ENCODE measurements at regions of chr16 and their contacts with region 1.

Region 1: DNA sequence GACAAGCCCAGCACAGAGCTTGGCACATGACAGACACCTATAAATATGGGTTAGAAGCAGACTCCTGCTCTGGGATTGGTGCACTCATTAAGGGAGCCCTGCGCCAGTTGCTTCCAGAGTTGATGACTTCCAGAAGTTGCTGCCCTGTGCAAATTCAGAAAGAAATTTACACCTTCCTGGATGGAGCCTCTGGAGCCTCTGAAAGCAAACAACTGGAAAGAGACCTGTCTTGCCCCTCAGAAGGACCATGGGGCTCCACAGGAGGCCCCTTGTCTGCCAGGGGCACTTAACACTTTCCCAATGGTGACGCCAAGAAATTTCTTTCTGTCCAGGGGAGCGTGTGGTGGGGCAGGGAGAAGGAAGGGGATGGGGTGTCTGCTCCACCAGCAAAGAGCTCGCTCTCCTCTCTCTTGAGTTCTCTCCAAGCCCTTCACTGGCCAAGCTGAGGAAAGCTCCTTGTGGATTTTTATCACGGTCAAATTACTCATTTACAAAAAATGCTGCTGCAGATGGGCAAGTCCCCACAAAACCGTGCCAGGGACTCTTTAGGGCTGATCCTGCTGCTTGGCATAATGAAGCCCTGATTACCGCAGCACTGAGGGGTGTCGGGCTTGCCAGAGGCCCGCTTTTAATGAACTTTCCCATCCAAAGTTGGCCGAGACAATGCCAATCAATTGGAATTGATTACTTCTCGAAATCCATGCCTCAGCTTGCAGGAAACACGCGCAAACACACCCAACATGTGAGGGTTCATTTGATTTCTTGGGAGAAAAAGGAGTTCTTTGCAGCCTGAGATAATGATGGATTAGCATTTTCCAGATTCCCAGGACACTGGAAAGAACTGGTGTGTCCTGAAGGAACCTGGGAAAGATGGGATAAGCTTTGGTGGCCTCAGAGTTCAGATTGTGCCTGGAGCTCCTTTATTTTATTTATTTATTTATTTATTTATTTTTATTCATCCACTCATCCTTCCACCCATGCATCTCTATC is 583.6 kb upstream of the CDH5 start:
- DNase-seq: peak in 1 of 2 donors; percentile 61
- ATAC-seq: no peak
- H3K4me3 ChIP-seq: no peak overlapping the region
- H3K27ac ChIP-seq: no peak overlapping the region
- H3K4me1 ChIP-seq: peaks cover 0 to 8% of the 10 kb centered on the region in 2 donors
- H3K27me3 ChIP-seq: no peaks in the 10 kb centered on the region

Region 2: DNA sequence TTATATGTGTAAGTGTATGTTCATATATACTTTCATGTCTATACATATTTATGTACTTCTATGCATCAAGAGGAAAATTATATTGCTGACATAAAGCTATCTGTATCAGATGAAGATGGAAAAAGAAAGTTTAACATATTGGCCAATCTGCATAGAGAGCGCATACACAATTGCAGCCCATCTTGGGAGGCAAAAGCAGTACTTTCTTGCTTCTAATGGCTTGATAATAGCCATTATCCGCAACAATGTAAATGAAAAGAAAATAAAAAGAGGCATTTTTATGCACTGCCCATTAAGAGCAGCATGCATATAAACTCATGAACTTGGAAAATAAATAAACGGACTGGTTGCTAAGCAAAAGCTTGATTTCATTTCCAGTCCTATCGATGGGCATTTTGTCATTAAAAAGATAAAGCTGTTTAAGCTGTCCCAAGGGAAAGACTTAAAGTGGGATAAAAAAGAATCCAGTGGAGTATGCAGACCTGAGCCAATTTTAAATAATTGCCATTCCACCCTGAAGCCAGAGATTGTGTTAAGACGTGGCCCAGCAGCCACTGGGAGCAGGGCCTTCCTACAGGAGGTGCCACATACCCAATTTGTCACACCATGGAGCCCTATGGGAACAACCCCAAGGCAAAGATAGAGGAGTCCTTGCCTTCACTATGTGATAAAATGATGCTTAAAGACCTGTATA is 477.5 kb before region 1 on chr16:
- intact Hi-C with region 1: loop called in 1 of 2 experiments (anchors 10 kb)
- DNase-seq: no peak
- ATAC-seq: peak; percentile 48
- H3K4me3 ChIP-seq: no peak overlapping the region
- H3K27ac ChIP-seq: no peak overlapping the region
- H3K4me1 ChIP-seq: peaks cover 4 to 6% of the 10 kb centered on the region in 2 donors
- H3K27me3 ChIP-seq: no peaks in the 10 kb centered on the region

Region 3: DNA sequence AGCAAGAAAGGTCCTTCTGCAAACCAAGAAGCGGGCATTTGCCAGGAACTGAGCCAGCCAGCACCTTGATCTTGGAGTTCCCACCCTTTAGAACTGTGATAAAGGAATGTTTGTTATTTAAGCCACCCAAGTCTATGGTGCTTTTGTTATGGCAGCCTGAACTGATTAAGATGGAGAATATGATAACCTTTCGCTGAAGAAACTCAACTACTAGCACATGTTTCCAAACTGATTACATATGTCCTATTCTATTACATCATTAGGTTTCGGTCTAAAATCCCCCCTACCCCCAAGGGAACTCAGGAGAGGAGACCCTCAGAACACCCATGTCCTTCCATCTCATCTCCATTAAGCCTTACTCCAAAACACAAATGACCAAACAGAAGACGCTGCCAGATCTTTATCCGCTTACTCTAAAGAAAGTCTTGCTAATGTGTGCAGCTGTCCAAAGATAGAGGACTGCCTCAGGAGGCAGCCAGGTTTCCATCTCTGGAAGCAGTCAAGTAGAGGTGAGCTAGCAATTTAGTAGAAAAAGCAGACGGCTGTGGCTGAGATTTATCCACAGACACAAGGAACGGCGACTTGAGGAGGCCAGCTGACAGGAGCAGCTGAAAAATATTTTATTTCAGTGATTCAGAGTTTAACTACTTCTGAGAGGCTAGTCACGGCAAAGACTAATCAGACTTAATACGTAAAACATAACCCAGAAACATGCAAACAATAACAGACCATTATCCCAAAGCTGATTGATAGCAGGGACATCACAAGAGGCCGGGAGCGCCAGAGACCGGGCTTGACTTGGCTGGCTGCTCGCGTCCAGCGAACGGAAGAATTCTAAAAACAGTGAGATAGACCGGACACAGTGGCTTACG is 27.9 kb before region 1 on chr16:
- intact Hi-C with region 1: no loop called
- DNase-seq: no peak
- ATAC-seq: no peak
- H3K4me3 ChIP-seq: no peak overlapping the region
- H3K27ac ChIP-seq: no peak overlapping the region
- H3K4me1 ChIP-seq: no peaks in the 10 kb centered on the region
- H3K27me3 ChIP-seq: no peaks in the 10 kb centered on the region

Region 4: DNA sequence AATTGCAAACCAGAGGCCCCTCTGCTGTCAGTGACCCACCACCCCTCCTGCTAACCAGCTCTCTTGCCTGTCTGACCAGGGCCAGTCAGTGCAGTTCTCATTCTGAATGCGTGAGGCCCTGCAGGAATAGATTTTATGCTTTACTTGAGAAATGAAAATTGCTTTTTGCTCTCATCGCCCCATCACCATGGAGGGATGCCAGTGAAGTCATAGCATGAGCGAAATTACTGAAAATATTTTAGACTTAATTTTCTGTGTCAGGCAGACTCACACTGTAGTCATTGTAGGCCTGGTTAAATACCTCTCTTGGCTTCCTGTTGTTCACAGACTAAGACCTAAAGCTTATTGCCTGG is 93.1 kb after region 1 on chr16:
- intact Hi-C with region 1: no loop called
- DNase-seq: no peak
- ATAC-seq: no peak
- H3K4me3 ChIP-seq: no peak overlapping the region
- H3K27ac ChIP-seq: no peak overlapping the region
- H3K4me1 ChIP-seq: no peaks in the 10 kb centered on the region
- H3K27me3 ChIP-seq: no peaks in the 10 kb centered on the region

Measured in aorta (tissue), 5 donors.